ENCODE measurements at regions of chr7 and their contacts with region 1.

Region 1: GRCh38 chr7:6637544-6638229 is 569 bp downstream of the ZNF316 start:
- DNase-seq: peak; percentile 16 to 83 (median 68)
- ATAC-seq: peak; percentile 79
- H3K4me3 ChIP-seq: peak overlapping the region; percentile 53 to 59
- H3K4me3 Mint-ChIP-seq: peak overlapping the region; percentile 78
- H3K27ac ChIP-seq: peak overlapping the region; percentile 42 to 66
- H3K27ac Mint-ChIP-seq: peak overlapping the region; percentile 84
- H3K4me1 ChIP-seq: peaks cover 16% of the 10 kb centered on the region
- H3K4me1 Mint-ChIP-seq: peaks cover 28% of the 10 kb centered on the region
- H3K27me3 ChIP-seq: no peaks in the 10 kb centered on the region
- H3K27me3 Mint-ChIP-seq: no peaks in the 10 kb centered on the region
- CTCF ChIP-seq: peak; percentile 23

Region 2: DNA sequence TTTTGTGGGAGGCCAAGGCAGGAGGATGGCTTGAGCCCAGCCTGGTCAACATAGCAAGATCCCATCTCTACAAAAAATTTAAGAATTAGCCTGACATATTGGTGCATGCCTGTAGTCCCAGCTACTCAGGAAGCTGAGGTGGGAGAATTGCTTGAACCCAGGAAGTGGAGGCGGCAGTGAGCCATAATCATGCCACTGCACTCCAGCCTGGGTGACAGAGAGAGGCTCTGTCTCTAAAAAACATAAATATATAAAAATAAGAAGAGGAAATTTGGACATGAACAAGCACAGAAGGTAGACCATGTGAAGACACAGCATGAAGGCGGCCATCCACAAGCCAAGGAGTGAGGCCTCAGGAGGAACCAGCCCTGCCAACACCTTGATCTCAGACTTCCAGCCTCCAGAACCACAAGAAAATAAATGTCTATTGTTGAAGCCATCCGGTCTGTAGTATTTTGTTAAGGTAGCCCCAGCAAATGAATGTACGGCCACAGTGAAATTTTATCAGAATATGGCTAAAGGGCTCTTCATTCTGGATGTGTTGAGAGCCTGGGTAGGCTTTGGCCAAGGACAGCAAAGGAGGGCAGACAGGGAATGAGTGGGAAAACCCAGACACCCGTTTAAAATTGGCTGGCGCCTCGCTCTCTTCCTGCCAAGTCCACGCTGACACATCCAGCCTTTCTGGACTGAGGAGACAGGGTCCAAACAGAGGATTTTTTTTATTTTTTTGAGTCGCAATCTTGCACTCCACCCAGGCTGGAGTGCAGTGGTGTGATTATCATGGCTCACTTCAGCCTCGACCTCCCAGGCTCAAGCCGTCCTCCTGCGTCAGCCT is 73.5 kb before region 1 on chr7:
- CTCF ChIA-PET with region 1: no interaction called
- POLR2A ChIA-PET with region 1: no interaction called
- intact Hi-C with region 1: no loop called
- DNase-seq: no peak
- ATAC-seq: no peak
- H3K4me3 ChIP-seq: no peak overlapping the region
- H3K4me3 Mint-ChIP-seq: no peak overlapping the region
- H3K27ac ChIP-seq: no peak overlapping the region
- H3K27ac Mint-ChIP-seq: no peak overlapping the region
- H3K4me1 ChIP-seq: no peaks in the 10 kb centered on the region
- H3K4me1 Mint-ChIP-seq: no peaks in the 10 kb centered on the region
- H3K27me3 ChIP-seq: no peaks in the 10 kb centered on the region
- H3K27me3 Mint-ChIP-seq: peaks cover under 1% of the 10 kb centered on the region
- CTCF ChIP-seq: no peak

Region 3: GRCh38 chr7:6577365-6578113 is 60.1 kb before region 1 on chr7 and contains the start of gene ZDHHC4:
- CTCF ChIA-PET with region 1: interaction called, 3 read pairs
- POLR2A ChIA-PET with region 1: no interaction called
- intact Hi-C with region 1: loop called in 1 of 2 experiments (anchors 2 kb)
- DNase-seq: peak; percentile 75 to 95 (median 87)
- ATAC-seq: peak; percentile 90
- H3K4me3 ChIP-seq: peak within 1 kb of the TSS; percentile 83 to 90
- H3K4me3 Mint-ChIP-seq: peak within 1 kb of the TSS; percentile 86
- H3K27ac ChIP-seq: peak within 1 kb of the TSS; percentile 91 to 97
- H3K27ac Mint-ChIP-seq: peak within 1 kb of the TSS; percentile 94
- H3K4me1 ChIP-seq: peaks cover 4% of the 10 kb centered on the region
- H3K4me1 Mint-ChIP-seq: peaks cover 14% of the 10 kb centered on the region
- H3K27me3 ChIP-seq: no peaks in the 10 kb centered on the region
- H3K27me3 Mint-ChIP-seq: peaks cover 2% of the 10 kb centered on the region
- CTCF ChIP-seq: no peak
- total RNA-seq, gene ZDHHC4: 35.6 to 37.0 TPM

Region 4: DNA sequence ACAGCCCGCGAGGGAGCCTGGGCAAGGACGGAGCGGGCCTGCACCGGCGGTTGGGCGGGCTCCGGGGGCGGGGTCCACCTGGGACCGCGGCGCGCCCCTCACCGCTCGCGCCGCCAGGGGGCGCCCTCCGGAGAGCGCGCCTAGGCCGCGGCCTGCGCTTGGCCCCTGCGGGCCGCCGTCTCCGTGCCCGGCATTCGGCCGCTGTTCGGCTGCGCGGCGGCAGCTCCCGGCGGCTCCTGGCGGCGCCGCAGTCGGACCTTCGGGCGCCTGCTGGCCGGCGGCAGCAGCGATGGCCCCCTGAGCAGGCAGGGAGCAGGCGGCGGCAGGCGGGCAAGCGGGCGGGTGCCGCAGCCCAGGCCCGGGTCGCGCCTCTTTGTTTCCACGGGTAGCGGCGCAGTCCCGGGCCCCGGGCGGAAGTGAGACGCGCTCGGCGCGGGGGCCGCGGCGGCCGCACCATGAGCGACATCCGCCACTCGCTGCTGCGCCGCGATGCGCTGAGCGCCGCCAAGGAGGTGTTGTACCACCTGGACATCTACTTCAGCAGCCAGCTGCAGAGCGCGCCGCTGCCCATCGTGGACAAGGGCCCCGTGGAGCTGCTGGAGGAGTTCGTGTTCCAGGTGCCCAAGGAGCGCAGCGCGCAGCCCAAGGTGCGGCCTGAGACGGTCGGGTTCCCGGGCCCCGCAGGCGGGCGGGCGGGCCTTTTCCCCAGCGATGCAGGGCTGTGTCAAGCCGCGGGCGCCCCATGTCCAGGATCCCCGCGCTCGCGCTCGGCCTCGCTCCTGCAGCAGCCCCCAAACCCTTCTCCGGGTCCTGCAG is 47.6 kb before region 1 on chr7 and contains the start of gene INTS15:
- CTCF ChIA-PET with region 1: interaction called, 4 read pairs
- POLR2A ChIA-PET with region 1: interaction called, 5 read pairs
- intact Hi-C with region 1: loop called (anchors 1 kb)
- DNase-seq: peak; percentile 66 to 93 (median 82)
- ATAC-seq: peak; percentile 90
- H3K4me3 ChIP-seq: peak within 1 kb of the TSS; percentile 64 to 93
- H3K4me3 Mint-ChIP-seq: peak within 1 kb of the TSS; percentile 89
- H3K27ac ChIP-seq: peak within 1 kb of the TSS; percentile 69 to 83
- H3K27ac Mint-ChIP-seq: peak within 1 kb of the TSS; percentile 94
- H3K4me1 ChIP-seq: peaks cover 24% of the 10 kb centered on the region
- H3K4me1 Mint-ChIP-seq: peaks cover 21% of the 10 kb centered on the region
- H3K27me3 ChIP-seq: no peaks in the 10 kb centered on the region
- H3K27me3 Mint-ChIP-seq: no peaks in the 10 kb centered on the region
- CTCF ChIP-seq: peak; percentile 56
- total RNA-seq, gene INTS15: 48.8 to 52.3 TPM

Region 5: GRCh38 chr7:6614953-6615722 is 22.5 kb before region 1 on chr7 and contains the start of gene ZNF853:
- CTCF ChIA-PET with region 1: no interaction called
- POLR2A ChIA-PET with region 1: no interaction called
- intact Hi-C with region 1: loop called in 1 of 2 experiments (anchors 2 kb)
- DNase-seq: peak in 4 of 9 experiments; percentile 38 to 60 (median 48)
- ATAC-seq: peak; percentile 64
- H3K4me3 ChIP-seq: peak within 1 kb of the TSS; percentile 62 to 63
- H3K4me3 Mint-ChIP-seq: peak within 1 kb of the TSS; percentile 81
- H3K27ac ChIP-seq: peak within 1 kb of the TSS in 1 of 2 experiments; percentile 37
- H3K27ac Mint-ChIP-seq: peak within 1 kb of the TSS; percentile 49
- H3K4me1 ChIP-seq: peaks cover 10% of the 10 kb centered on the region
- H3K4me1 Mint-ChIP-seq: peaks cover 39% of the 10 kb centered on the region
- H3K27me3 ChIP-seq: no peaks in the 10 kb centered on the region
- H3K27me3 Mint-ChIP-seq: no peaks in the 10 kb centered on the region
- CTCF ChIP-seq: no peak
- total RNA-seq, gene ZNF853: 4.2 to 4.8 TPM